Lower leg skin (tissue), 4 donors: ENCODE measurements at regions of chr4 and their contacts with region 1.

Region 1: GRCh38 chr4:38730830-38731646 is 51.8 kb downstream of the TLR10 start:
- DNase-seq: peak; percentile 79 to 96
- H3K4me3 ChIP-seq: no peak overlapping the region
- CTCF ChIP-seq: peak in 1 of 3 donors; percentile 92
- POLR2A ChIP-seq: no peak

Region 2: DNA sequence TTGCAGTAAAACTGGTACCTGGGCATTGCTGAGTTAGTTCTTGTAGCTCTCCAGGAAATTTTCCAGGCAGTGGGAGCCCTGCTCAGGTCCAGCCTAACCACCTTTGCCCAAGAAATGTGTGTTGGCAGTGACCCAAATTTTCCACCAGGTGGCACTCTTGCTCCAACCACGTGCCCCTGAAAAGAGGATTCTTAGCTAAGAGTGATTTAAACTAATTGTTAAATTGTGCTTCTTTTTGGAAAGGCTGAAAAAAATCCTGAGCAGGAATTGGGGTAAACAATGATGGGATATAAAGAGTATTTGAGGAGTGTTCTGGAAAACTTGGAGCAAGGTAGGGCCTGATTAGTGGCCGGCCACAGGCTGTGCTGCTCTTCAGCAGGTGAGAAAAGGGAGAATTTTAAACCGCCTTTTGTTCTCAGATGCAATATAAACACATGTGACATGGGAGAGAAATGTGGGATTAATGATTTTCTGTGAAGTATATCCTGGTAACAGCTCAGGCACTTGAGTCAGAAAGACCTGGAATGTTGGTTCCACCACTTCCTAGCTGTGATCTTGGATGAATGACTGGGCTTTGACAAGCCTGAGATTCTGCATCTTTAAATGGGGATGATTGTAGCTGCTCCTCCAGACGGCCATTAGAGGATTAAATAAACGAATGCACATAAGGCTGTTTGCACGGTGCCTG is 551.2 kb before region 1 on chr4:
- intact Hi-C with region 1: loop called (anchors 2 kb)
- DNase-seq: peak; percentile 80 to 93
- H3K4me3 ChIP-seq: no peak overlapping the region
- CTCF ChIP-seq: peak in 1 of 3 donors; percentile 43
- POLR2A ChIP-seq: no peak

Region 3: DNA sequence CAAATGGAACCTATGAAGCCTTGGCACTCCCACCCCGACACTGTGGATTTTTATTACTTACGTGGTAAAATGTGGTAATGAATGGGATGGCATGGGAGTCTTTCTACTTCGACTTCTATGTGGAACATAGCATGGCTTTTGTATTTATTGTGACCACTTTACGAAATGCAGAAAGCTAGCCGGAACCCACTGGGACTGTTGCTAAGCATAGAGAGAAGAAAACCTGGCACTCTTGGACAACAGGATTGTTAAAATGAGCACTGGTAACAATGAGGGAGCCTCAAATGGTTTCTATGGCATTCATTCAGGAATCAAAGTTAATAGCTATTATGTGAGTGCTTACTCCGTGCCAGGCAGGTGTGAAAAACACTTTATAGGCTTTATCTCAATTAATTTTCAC is 1133.4 kb after region 1 on chr4:
- intact Hi-C with region 1: loop called (anchors 5 kb)
- DNase-seq: no peak
- H3K4me3 ChIP-seq: no peak overlapping the region
- CTCF ChIP-seq: no peak
- POLR2A ChIP-seq: no peak